AG04449 (cell line): ENCODE measurements at regions of chr1 and their contacts with region 1.

Region 1: GRCh38 chr1:94012686-94013624 is 103.7 kb upstream of the GCLM start:
- DNase-seq: no peak
- H3K4me3 ChIP-seq: no peak overlapping the region
- CTCF ChIP-seq: no peak

Region 2: DNA sequence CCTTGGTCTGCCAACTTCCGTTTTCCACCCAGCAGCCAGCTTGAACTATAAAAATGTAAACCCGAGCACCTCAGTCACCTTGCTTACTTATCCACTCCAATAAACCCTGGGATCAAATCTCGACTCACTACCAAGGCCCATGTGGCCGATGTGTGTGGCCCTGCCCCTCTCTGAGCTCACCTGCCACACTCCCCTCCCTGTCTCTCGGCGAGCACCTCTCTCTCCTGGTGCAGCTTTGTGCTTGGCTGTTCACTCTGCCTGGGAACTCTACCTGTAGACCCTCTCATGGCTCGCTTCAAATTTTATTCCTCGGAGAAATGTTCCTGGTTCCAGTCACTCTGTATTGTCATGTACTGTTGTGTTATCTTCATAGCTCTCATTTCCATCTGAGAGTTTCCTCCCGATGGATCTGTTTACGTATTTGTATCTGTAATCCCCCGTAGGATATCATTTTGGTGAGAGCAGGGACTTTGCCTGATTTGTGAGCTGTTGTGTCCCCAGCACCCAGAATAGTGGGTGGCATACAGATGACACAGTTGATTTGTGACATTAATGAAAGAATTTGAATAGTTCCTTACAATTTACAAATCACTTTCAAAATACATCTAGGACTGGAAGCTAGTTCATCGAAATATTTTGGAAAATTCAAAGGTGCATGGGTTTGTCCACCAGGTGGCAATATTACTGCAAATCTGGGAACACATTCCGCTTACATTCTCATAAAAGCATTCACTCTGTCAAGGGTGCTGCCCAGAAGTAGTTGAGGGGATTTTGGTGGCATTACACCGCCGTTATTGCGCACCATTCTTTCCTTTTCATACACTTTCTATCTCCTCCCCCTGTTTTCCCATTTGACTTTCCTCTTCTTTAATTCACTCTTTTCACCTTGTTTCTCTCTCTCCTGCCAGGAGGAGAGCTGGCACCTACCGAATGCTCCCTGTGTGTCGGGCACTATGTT is 12.7 kb after region 1 on chr1:
- CTCF ChIA-PET with region 1: interaction called, 41 read pairs
- POLR2A ChIA-PET with region 1: no interaction called
- DNase-seq: no peak
- H3K4me3 ChIP-seq: no peak overlapping the region
- CTCF ChIP-seq: peak; percentile 41